ENCODE measurements at regions of chr14 and their contacts with region 1.

Region 1: DNA sequence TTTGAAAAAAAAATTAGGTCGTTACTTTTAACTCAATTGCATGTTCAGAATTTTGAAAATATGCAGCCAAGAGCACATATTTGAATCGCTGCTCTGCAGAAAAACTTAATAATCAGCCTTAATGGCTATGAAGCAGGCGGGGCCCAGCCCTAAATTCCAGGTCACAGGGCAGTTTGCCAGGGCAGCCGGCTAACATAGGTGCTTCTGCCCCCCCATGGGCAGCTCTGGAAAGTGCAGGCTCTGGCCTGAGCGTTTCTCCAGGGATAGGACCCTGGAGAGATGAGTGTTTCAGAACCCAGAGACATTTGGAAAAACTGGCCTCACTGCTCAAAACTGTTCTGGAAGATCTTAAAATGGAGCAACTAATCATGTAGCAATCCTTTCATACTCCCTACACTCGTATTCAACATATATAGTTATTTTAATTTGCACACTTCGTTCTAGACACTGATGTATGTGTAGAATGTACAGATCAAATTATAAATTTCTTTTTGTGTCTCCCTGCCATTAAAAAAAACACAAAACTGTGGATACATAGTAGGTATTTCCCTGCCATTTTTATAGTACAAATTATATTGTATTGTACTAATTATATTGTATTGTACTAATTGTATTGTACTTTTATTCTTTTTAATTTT is 26.0 kb upstream of the PTGR2 start:
- DNase-seq: peak; percentile 94
- ATAC-seq: peak; percentile 59
- H3K4me3 ChIP-seq: no peak overlapping the region
- H3K27ac ChIP-seq: no peak overlapping the region
- H3K4me1 ChIP-seq: peaks cover 33% of the 10 kb centered on the region
- H3K27me3 ChIP-seq: no peaks in the 10 kb centered on the region
- CTCF ChIP-seq: peak; percentile 93

Region 2: GRCh38 chr14:73728717-73729330 is 96.8 kb before region 1 on chr14:
- CTCF ChIA-PET with region 1: interaction called, 3 read pairs
- POLR2A ChIA-PET with region 1: interaction called, 3 read pairs
- intact Hi-C with region 1: loop called (anchors 1 kb)
- DNase-seq: peak; percentile 88
- ATAC-seq: peak; percentile 52
- H3K4me3 ChIP-seq: no peak overlapping the region
- H3K27ac ChIP-seq: no peak overlapping the region
- H3K4me1 ChIP-seq: peaks cover 37% of the 10 kb centered on the region
- H3K27me3 ChIP-seq: no peaks in the 10 kb centered on the region
- CTCF ChIP-seq: peak; percentile 94

Region 3: GRCh38 chr14:73759714-73760597 is 65.7 kb before region 1 on chr14:
- CTCF ChIA-PET with region 1: no interaction called
- POLR2A ChIA-PET with region 1: interaction called, 9 read pairs
- intact Hi-C with region 1: loop called (anchors 2 kb)
- DNase-seq: peak; percentile 98
- ATAC-seq: peak; percentile 71
- H3K4me3 ChIP-seq: peak overlapping the region; percentile 93
- H3K27ac ChIP-seq: peak overlapping the region; percentile 67
- H3K4me1 ChIP-seq: peaks cover 57% of the 10 kb centered on the region
- H3K27me3 ChIP-seq: no peaks in the 10 kb centered on the region
- CTCF ChIP-seq: no peak

Region 4: DNA sequence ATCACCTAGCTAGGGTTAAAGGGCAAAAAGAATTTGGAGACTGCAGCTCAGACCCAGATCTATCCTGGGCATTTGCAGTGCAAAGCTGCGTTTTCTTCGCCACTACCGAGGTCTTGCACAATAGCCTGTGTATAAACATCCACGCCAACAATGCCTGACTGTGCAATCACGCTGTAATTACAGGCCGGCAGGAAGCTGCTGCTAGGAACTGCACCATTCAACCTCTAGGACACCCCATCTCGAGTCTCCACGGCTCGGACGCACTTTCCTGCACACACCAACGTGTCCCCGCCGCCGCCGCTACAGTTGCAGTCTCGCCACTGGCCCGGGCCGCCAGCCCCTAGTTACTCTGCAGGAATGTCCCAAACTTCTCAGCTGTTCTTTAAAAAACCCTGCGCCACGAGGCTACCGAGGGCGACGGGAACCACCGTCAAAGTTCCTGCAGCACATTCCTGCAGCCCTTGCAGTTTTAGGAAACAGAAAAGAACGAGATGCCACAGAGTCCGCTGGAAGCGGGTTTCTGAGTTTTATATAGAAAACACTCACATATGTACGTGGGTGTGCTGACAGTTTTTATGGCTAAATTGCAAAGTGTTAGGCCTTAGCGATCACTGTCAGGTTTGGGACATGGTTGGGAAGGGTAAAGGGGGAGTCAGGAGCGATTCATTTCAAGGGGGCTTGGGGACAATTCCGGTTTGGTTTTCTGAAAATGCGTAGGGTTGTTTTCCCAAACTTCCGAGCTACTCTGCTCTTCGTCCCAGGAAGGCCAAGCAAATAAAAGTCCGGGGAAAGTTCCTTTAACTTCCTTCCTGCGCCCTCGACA is 39.6 kb before region 1 on chr14:
- CTCF ChIA-PET with region 1: interaction called, 3 read pairs
- POLR2A ChIA-PET with region 1: interaction called, 4 read pairs
- intact Hi-C with region 1: loop called (anchors 1 kb)
- DNase-seq: peak; percentile 86
- ATAC-seq: peak; percentile 47
- H3K4me3 ChIP-seq: peak overlapping the region; percentile 73
- H3K27ac ChIP-seq: peak overlapping the region; percentile 97
- H3K4me1 ChIP-seq: peaks cover 56% of the 10 kb centered on the region
- H3K27me3 ChIP-seq: no peaks in the 10 kb centered on the region
- CTCF ChIP-seq: no peak

Region 5: GRCh38 chr14:73795972-73796371 is 29.7 kb before region 1 on chr14:
- CTCF ChIA-PET with region 1: interaction called, 3 read pairs
- POLR2A ChIA-PET with region 1: interaction called, 11 read pairs
- intact Hi-C with region 1: no loop called
- DNase-seq: peak; percentile 97
- ATAC-seq: peak; percentile 96
- H3K4me3 ChIP-seq: no peak overlapping the region
- H3K27ac ChIP-seq: peak overlapping the region; percentile 67
- H3K4me1 ChIP-seq: peaks cover 30% of the 10 kb centered on the region
- H3K27me3 ChIP-seq: no peaks in the 10 kb centered on the region
- CTCF ChIP-seq: no peak

Region 6: DNA sequence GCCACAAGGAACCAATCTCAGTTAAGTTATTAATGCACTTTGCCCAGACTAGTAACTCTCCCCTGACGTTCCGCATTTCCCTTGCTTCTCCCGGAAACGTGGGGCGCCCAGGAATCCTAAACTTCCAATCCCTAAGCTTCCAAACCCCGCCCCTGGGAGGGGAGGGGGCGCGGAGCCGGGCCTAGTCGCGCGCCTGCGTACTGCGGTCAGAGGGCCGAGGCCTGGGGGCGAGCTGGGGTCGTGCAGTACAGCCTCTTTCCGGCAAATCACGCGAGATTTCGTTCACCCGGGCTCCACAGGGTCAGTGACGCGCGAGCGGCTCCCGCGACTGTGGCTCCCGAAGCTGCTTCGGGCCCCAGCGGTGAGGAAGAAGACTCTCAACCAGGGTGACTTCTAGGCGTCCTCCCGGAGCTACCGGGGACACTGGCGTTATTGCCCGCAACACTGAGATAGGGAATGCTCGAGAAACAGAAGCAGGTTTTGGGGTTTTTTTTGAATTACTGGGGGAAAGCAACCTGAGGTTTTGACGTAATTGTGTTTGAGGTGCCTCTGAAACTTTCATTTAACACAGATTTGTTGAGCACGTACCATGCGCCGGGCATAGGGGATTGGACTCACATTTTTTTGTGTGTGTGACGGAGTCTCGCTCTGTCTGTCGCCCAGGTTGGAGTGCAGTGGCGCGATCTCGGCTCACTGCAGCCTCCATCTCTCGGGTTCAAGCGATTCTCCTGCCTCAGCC is 26.1 kb after region 1 on chr14 and contains the start of gene PTGR2:
- CTCF ChIA-PET with region 1: interaction called, 3 read pairs
- POLR2A ChIA-PET with region 1: no interaction called
- intact Hi-C with region 1: loop called (anchors 2 kb)
- DNase-seq: peak; percentile 97
- ATAC-seq: peak; percentile 85
- H3K4me3 ChIP-seq: peak within 1 kb of the TSS; percentile 73
- H3K27ac ChIP-seq: peak within 1 kb of the TSS; percentile 80
- H3K4me1 ChIP-seq: peaks cover 17% of the 10 kb centered on the region
- H3K27me3 ChIP-seq: no peaks in the 10 kb centered on the region
- CTCF ChIP-seq: no peak
- total RNA-seq, gene PTGR2: 6.2 and 7.9 TPM in 2 replicates

Region 7: DNA sequence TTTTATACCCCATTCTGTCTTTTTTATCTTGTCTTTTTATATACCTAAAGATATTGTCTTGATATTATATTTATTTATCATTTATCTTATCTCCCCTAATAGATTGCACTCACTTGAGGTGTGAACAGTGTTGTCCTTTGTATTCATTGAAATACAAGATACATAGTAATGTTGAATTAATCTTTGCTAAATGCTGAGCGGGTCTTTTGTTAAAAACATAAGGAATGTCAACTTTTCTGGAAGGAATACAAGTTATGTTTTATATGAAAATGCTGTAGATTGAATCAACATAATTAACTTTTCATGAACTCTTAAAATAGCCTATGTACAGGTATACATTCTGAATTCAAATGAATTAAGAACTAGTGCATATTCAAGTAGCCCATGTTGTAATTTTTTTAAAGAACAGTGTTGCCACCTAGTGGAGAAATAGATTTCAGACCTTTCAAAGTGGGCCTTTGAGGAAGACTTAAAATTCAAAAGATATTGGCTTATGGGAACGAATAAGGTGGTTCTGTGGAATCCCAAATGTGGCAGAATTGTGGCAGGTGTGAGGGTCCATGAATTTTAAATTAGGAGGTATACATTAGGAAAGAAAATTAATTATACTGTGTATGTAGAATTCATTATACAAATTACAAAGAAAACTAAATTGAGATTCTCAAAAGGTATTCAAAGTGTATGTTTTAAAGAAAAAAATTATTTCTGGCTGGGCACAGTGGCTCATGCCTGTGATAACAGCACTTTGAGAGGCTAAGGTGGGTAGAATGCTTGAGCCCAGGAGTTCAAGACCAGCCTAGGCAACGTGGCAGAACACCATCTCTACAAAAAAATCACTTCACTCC is 212.6 kb after region 1 on chr14:
- CTCF ChIA-PET with region 1: no interaction called
- POLR2A ChIA-PET with region 1: no interaction called
- intact Hi-C with region 1: loop called (anchors 5 kb)
- DNase-seq: peak; percentile 84
- ATAC-seq: peak; percentile 59
- H3K4me3 ChIP-seq: no peak overlapping the region
- H3K27ac ChIP-seq: no peak overlapping the region
- H3K4me1 ChIP-seq: no peaks in the 10 kb centered on the region
- H3K27me3 ChIP-seq: no peaks in the 10 kb centered on the region
- CTCF ChIP-seq: peak; percentile 89